Cardiac septum (tissue), 1 donor: ENCODE measurements at regions of chr20 and their contacts with region 1.

Region 1: GRCh38 chr20:32357869-32358631 is at the start of gene ASXL1:
- DNase-seq: peak; percentile 99
- total RNA-seq, gene ASXL1: 36.3 TPM

Region 2: GRCh38 chr20:32109392-32110172 is 248.5 kb before region 1 on chr20 and contains the start of gene TM9SF4:
- intact Hi-C with region 1: loop called (anchors 2 kb)
- DNase-seq: peak; percentile 93
- total RNA-seq, gene TM9SF4: 31.6 TPM

Region 3: DNA sequence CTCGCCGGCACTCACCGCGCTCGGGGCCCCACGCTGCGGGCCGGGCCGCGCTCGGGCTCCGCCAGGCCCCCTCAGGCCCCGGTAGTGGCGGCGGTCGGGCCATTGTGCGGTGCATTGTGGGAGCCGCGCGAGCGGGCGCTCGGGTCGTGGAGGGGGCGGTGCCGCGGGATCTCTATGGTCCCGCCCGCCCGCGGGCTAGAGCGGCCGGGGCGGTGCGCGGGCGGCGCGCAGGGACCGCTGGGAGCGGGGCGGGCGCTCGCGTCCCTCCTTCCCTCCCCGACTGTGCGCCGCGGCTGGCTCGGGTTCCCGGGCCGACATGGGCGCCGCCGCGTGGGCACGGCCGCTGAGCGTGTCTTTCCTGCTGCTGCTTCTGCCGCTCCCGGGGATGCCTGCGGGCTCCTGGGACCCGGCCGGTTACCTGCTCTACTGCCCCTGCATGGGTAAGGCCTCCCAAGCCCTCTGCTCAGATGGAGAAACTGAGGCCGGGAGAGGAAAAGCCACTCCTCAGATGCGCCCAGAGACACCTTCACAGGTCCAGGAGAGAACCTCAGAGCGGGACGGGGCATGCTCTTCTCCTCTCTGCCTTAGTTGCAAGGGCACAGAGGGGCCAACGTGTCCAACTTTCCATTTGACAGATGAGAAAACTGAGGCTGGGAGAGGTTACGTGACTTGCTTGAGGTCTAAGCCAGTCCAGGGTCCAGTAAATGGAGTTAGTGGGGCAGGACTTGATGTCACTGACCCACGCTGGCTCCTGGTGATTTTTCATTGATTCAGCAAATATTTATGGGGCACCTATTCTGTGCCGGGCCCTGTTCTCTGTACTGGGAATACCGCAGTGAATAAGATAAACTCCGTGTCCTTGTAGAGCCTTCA is 150.2 kb before region 1 on chr20 and contains the starts of genes PLAGL2 and POFUT1:
- intact Hi-C with region 1: loop called (anchors 5 kb)
- DNase-seq: peak; percentile 96
- total RNA-seq, gene PLAGL2: 8.5 TPM
- total RNA-seq, gene POFUT1: 22.6 TPM

Region 4: GRCh38 chr20:32277361-32278198 is 80.5 kb before region 1 on chr20 and contains the start of gene KIF3B:
- intact Hi-C with region 1: loop called (anchors 5 kb)
- DNase-seq: peak; percentile 93
- total RNA-seq, gene KIF3B: 17.3 TPM

Region 5: DNA sequence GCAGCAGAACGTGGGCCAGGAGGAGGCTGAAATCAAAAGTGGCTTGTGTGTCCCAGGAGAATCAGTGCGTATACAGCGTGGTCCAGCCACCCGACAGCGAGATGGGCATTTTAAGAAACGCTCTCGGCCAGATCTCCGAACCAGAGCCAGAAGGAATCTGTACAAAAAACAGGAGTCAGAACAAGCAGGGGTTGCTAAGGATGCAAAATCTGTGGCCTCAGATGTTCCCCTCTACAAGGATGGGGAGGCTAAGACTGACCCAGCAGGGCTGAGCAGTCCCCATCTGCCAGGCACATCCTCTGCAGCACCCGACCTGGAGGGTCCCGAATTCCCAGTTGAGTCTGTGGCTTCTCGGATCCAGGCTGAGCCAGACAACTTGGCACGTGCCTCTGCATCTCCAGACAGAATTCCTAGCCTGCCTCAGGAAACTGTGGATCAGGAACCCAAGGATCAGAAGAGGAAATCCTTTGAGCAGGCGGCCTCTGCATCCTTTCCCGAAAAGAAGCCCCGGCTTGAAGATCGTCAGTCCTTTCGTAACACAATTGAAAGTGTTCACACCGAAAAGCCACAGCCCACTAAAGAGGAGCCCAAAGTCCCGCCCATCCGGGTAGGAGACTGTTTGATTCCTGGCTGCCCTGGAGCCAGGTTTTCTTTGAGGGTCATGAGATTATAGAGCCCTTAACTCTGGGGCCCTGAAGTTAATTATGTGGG is 75.4 kb after region 1 on chr20:
- intact Hi-C with region 1: loop called (anchors 1 kb)
- DNase-seq: no peak

Region 6: GRCh38 chr20:32484958-32485769 is 127.1 kb after region 1 on chr20:
- intact Hi-C with region 1: loop called (anchors 5 kb)
- DNase-seq: no peak

Region 7: DNA sequence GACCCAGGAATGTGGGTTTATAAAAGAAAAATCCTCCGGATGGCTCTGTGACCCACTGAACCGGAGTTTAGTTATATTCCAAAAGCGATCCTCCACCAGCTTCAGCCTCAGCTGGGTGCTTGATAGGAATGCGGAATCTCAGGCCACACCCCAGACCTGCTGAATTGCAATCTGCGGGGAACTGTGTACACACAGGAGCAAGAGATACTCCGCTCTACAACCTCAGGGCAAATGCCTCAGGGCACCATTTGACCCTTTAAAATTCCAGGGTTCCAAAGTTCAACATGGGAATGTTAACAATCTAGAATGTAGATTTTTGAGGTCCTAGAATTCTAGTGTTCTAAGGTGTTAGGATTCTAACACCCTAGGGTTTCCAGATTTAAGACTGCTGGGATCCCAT is 820.7 kb after region 1 on chr20:
- intact Hi-C with region 1: no loop called
- DNase-seq: peak; percentile 9